CD8-positive, alpha-beta T cell (primary cell): ENCODE measurements at regions of chr2 and their contacts with region 1.

Region 1: DNA sequence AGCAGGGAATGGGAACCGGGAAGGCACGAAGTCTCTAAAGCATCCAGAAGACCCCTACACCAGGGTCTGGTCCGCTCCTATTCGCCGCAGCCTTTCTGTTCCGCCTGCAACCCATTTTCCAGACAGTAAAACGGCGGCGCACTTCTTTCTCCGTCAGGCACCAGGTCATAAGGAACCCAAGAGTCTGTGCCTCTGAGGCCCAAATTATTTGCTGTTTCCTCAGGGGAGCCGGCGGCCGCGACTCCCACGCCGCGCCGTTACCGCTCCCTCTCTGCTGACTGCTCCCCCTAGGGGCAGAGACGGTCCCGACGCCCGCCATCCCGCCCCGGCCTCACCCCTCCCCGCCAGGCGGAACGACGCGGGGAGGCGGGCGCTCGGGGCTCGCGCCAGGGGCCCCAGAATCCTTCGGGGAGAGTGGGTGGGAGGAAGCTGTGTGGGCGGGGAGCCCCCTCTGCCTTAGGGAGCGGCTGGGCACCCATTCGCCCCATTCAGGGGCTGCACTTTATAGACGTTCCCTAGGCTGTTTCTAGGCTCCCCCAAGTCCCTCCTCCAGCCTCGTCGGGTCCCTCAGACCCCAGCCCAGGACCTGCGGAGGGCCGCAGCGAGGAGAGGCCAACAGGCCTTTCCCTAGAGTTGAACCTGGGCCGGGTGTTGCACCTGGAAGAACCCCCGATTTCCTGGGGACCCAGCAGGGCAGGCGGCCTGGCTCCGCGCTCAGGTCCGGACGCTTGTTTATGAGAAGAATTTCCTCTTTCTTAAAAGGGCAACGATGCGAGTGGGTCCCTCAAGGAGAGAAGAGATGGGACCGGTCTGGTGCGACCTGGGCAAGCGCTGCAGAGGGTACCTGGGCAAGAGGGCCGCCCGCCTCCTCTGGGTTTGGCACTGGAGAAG is 3.6 kb upstream of the CTDSP1 start:
- DNase-seq: peak; percentile 87 to 98 (median 94)
- ATAC-seq: peak; percentile 74
- H3K4me3 ChIP-seq: peak overlapping the region; percentile 83 to 99
- H3K4me3 Mint-ChIP-seq: peak overlapping the region; percentile 95
- H3K27ac ChIP-seq: peak overlapping the region; percentile 92 to 98
- H3K27ac Mint-ChIP-seq: peak overlapping the region; percentile 98
- H3K4me1 ChIP-seq: peaks cover 40% of the 10 kb centered on the region
- H3K4me1 Mint-ChIP-seq: peaks cover 43% of the 10 kb centered on the region
- H3K27me3 ChIP-seq: no peaks in the 10 kb centered on the region
- H3K27me3 Mint-ChIP-seq: no peaks in the 10 kb centered on the region
- CTCF ChIP-seq: peak; percentile 83

Region 2: DNA sequence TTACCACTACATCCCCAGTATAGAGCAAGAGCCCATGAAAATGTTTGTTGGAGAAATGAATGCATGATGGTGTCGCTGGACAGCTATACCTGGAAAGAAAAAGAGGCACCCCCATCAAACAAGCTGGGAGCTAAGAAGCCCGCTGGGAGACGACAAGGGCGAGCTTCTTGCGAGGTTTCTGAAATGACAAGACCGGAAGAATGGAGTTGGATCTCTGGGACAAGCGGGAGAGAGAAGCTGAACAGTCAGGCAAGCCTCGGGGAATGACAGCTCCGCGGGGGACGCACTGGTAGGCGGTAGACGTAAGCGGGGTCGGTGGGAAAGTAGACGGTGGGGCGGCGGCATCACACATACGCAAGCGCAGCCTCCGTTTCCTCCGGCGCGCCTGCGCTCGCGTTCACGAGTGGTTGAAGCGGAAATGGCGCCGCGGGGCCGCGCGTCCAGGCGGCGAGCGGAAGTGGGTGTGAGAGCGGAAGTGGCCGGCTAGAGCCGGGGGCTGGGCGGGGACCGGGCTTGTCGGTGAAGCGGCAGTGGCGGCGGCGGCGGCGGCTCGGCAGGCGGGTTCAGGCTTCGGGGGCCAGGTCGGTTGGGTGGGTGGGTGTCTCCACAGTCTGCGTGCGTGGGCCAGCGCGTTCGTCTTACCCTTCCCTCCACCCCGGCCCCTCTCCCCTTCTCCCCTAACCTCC is 179.2 kb before region 1 on chr2 and contains the start of gene ARPC2:
- CTCF ChIA-PET with region 1: no interaction called
- POLR2A ChIA-PET with region 1: interaction called, 8 read pairs
- intact Hi-C with region 1: loop called (anchors 1 to 2 kb)
- DNase-seq: peak; percentile 90 to 98 (median 95)
- ATAC-seq: peak; percentile 78
- H3K4me3 ChIP-seq: peak within 1 kb of the TSS; percentile 91 to 97
- H3K4me3 Mint-ChIP-seq: peak within 1 kb of the TSS; percentile 91
- H3K27ac ChIP-seq: peak within 1 kb of the TSS; percentile 87 to 99
- H3K27ac Mint-ChIP-seq: peak within 1 kb of the TSS; percentile 97
- H3K4me1 ChIP-seq: peaks cover 36% of the 10 kb centered on the region
- H3K4me1 Mint-ChIP-seq: peaks cover 45% of the 10 kb centered on the region
- H3K27me3 ChIP-seq: no peaks in the 10 kb centered on the region
- H3K27me3 Mint-ChIP-seq: no peaks in the 10 kb centered on the region
- CTCF ChIP-seq: no peak
- total RNA-seq, gene ARPC2: 521 to 547 TPM

Region 3: GRCh38 chr2:218301176-218301819 is 94.7 kb before region 1 on chr2:
- CTCF ChIA-PET with region 1: interaction called, 29 read pairs
- POLR2A ChIA-PET with region 1: interaction called, 7 read pairs
- intact Hi-C with region 1: loop called (anchors 1 kb)
- DNase-seq: peak; percentile 78 to 93 (median 89)
- ATAC-seq: peak; percentile 98
- H3K4me3 ChIP-seq: no peak overlapping the region
- H3K4me3 Mint-ChIP-seq: no peak overlapping the region
- H3K27ac ChIP-seq: no peak overlapping the region
- H3K27ac Mint-ChIP-seq: no peak overlapping the region
- H3K4me1 ChIP-seq: no peaks in the 10 kb centered on the region
- H3K4me1 Mint-ChIP-seq: peaks cover 6% of the 10 kb centered on the region
- H3K27me3 ChIP-seq: no peaks in the 10 kb centered on the region
- H3K27me3 Mint-ChIP-seq: no peaks in the 10 kb centered on the region
- CTCF ChIP-seq: peak; percentile 83

Region 4: GRCh38 chr2:218406209-218406948 is 10.3 kb after region 1 on chr2:
- CTCF ChIA-PET with region 1: interaction called, 31 read pairs
- POLR2A ChIA-PET with region 1: interaction called, 46 read pairs
- intact Hi-C with region 1: loop called (anchors 1 kb)
- DNase-seq: peak; percentile 79 to 98 (median 95)
- ATAC-seq: peak; percentile 68
- H3K4me3 ChIP-seq: peak overlapping the region; percentile 52 to 63
- H3K4me3 Mint-ChIP-seq: peak overlapping the region; percentile 82
- H3K27ac ChIP-seq: peak overlapping the region; percentile 56 to 73
- H3K27ac Mint-ChIP-seq: peak overlapping the region; percentile 94
- H3K4me1 ChIP-seq: peaks cover 49% of the 10 kb centered on the region
- H3K4me1 Mint-ChIP-seq: peaks cover 56% of the 10 kb centered on the region
- H3K27me3 ChIP-seq: no peaks in the 10 kb centered on the region
- H3K27me3 Mint-ChIP-seq: peaks cover 2% of the 10 kb centered on the region
- CTCF ChIP-seq: peak; percentile 59

Region 5: GRCh38 chr2:218733171-218734021 is 337.4 kb after region 1 on chr2:
- CTCF ChIA-PET with region 1: no interaction called
- POLR2A ChIA-PET with region 1: no interaction called
- intact Hi-C with region 1: no loop called
- DNase-seq: peak in 2 of 9 experiments; percentile 28 to 56
- ATAC-seq: peak; percentile 62
- H3K4me3 ChIP-seq: no peak overlapping the region
- H3K4me3 Mint-ChIP-seq: no peak overlapping the region
- H3K27ac ChIP-seq: no peak overlapping the region
- H3K27ac Mint-ChIP-seq: no peak overlapping the region
- H3K4me1 ChIP-seq: no peaks in the 10 kb centered on the region
- H3K4me1 Mint-ChIP-seq: peaks cover 13% of the 10 kb centered on the region
- H3K27me3 ChIP-seq: no peaks in the 10 kb centered on the region
- H3K27me3 Mint-ChIP-seq: no peaks in the 10 kb centered on the region
- CTCF ChIP-seq: no peak

Region 6: DNA sequence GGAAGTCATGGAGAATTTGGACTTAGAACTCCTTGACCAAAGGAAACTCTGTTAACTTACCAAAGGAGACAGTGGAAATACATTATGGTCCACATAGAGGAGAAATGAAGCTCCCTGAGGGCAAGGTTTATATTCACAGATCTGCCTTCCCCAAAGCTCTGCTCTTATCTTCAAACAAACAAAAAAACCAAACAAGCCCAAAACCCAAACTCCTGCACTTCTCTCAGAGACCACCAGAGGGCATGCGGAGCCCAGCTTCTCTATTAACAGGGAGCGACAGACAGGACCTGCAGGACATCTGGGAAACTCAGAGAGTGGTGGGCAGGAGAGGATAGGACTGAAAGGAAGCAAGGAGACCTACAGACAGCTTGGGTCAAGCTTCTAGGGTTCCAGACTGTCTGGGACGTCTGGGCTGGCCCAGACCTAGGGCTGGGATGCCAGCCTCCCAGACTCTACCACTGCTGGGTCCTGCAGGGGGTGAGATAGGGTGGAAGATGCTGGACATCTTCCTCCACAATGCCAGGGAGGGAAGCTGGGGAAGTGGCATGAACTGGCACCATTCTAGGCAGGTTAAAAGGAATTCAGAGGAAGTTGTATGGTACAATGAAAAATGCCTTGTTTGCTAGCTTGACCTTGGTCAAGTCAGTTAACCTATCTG is 480.6 kb after region 1 on chr2:
- CTCF ChIA-PET with region 1: no interaction called
- POLR2A ChIA-PET with region 1: no interaction called
- intact Hi-C with region 1: loop called (anchors 5 kb)
- DNase-seq: peak; percentile 61 to 86 (median 78)
- ATAC-seq: no peak
- H3K4me3 ChIP-seq: no peak overlapping the region
- H3K4me3 Mint-ChIP-seq: no peak overlapping the region
- H3K27ac ChIP-seq: no peak overlapping the region
- H3K27ac Mint-ChIP-seq: no peak overlapping the region
- H3K4me1 ChIP-seq: peaks cover 59% of the 10 kb centered on the region
- H3K4me1 Mint-ChIP-seq: peaks cover 41% of the 10 kb centered on the region
- H3K27me3 ChIP-seq: peaks cover 16 to 30% of the 10 kb centered on the region in 2 experiments
- H3K27me3 Mint-ChIP-seq: peaks cover 34% of the 10 kb centered on the region
- CTCF ChIP-seq: peak; percentile 99

Region 7: DNA sequence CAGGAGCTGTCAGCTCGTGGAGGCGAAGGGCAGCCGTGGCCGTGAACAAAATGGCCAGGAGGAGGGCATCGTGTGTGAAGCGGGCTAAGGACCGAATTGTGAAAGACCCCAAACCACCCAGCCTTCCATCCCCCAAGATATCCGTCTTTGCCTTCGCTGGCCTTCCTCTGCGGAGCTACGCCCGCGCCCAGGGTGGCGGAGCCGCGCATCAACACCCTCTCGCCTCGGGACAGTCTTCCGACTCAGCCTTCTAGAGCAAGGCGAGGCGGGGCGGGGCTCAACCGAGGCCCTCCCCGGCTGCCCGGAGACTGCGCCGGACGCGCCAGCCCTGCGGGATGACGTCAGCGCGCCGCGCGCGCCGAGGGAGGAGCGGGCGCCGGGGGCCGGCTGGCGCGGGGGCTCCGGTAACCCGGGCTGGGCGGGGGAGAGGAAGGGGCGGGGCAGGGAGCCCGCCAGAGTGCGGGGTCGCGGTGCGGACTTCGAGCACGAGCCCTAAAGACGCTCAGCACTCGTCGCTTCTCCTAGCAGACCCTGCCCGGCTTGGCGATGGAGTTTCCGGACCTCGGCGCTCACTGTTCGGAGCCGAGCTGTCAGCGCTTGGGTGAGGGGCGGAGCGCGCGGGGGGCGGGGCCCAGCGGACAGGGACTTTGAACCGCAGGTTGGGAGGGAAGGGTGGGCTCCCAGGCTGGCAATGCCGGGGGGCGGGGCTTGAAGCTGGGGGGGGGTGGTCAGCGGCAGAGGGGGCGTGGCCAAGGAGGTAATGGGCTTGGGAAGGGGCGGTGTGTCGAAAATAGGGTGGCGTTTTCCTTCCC is 810.6 kb after region 1 on chr2 and contains the start of gene ZFAND2B:
- CTCF ChIA-PET with region 1: no interaction called
- POLR2A ChIA-PET with region 1: no interaction called
- intact Hi-C with region 1: loop called in 1 of 2 experiments (anchors 1 kb)
- DNase-seq: peak; percentile 91 to 99 (median 96)
- ATAC-seq: peak; percentile 88
- H3K4me3 ChIP-seq: peak within 1 kb of the TSS; percentile 63 to 68
- H3K4me3 Mint-ChIP-seq: peak within 1 kb of the TSS; percentile 95
- H3K27ac ChIP-seq: peak within 1 kb of the TSS; percentile 87 to 88
- H3K27ac Mint-ChIP-seq: peak within 1 kb of the TSS; percentile 99
- H3K4me1 ChIP-seq: peaks cover 48% of the 10 kb centered on the region
- H3K4me1 Mint-ChIP-seq: peaks cover 46% of the 10 kb centered on the region
- H3K27me3 ChIP-seq: no peaks in the 10 kb centered on the region
- H3K27me3 Mint-ChIP-seq: no peaks in the 10 kb centered on the region
- CTCF ChIP-seq: no peak
- total RNA-seq, gene ZFAND2B: 74.3 to 78.7 TPM